ENCODE measurements at regions of chr22 and their contacts with region 1.

Region 1: GRCh38 chr22:26789951-26790350 is 132.6 kb downstream of the MIAT start:
- DNase-seq: no peak
- ATAC-seq: no peak
- H3K4me3 ChIP-seq: no peak overlapping the region
- H3K4me3 Mint-ChIP-seq: no peak overlapping the region
- H3K27ac ChIP-seq: no peak overlapping the region
- H3K27ac Mint-ChIP-seq: no peak overlapping the region
- H3K4me1 ChIP-seq: peaks cover 5% of the 10 kb centered on the region
- H3K4me1 Mint-ChIP-seq: peaks cover 9% of the 10 kb centered on the region
- H3K27me3 ChIP-seq: no peaks in the 10 kb centered on the region
- H3K27me3 Mint-ChIP-seq: no peaks in the 10 kb centered on the region
- CTCF ChIP-seq: no peak

Region 2: DNA sequence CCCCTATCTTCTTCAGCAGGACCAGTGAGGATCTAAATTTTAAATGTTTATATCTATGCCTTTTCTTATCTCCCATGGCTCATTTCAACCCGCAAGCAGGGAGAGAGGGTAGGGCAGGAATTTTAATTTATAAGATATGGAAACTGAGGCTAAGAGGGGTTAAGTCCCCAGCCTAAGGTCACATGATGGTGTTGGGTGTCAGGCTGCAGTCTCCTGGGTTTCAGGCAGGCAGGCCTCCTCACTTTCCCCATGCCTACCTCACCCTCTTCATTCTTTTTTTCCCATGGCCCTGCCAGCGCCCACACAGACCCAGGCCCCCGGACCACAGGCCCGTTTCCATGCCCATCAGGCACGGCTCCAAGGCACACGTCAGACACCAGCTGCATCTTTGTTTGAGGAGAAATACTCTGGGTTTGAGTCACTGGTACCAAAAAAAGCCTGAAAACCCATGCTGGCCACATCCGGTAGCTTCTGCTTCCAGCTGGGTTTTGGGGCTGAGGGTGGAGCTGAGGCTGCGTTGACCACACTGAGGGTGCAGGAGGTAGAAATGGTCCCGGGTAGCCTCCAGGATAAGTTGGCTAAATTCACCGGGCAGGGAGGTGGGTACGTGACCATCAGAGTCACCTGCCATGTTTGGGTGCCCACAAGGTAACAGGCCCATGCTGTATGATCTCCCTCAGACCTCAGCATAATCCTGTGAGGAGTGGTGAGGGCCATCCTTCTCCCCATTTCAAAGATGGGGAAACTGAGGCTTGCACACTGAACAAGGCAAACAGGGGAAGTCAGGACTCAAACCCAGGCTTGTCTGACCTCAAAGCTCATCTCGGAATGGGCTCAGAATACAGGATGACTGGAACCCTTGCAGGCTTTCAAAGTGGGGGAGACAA is 179.6 kb before region 1 on chr22:
- CTCF ChIA-PET with region 1: no interaction called
- POLR2A ChIA-PET with region 1: no interaction called
- intact Hi-C with region 1: no loop called
- DNase-seq: peak in 7 of 9 experiments; percentile 16 to 75 (median 43)
- ATAC-seq: peak; percentile 79
- H3K4me3 ChIP-seq: peak overlapping the region in 1 of 2 experiments; percentile 7
- H3K4me3 Mint-ChIP-seq: peak overlapping the region; percentile 37
- H3K27ac ChIP-seq: peak overlapping the region in 1 of 2 experiments; percentile 53
- H3K27ac Mint-ChIP-seq: peak overlapping the region; percentile 81
- H3K4me1 ChIP-seq: peaks cover 22% of the 10 kb centered on the region
- H3K4me1 Mint-ChIP-seq: peaks cover 22% of the 10 kb centered on the region
- H3K27me3 ChIP-seq: no peaks in the 10 kb centered on the region
- H3K27me3 Mint-ChIP-seq: no peaks in the 10 kb centered on the region
- CTCF ChIP-seq: no peak

Region 3: DNA sequence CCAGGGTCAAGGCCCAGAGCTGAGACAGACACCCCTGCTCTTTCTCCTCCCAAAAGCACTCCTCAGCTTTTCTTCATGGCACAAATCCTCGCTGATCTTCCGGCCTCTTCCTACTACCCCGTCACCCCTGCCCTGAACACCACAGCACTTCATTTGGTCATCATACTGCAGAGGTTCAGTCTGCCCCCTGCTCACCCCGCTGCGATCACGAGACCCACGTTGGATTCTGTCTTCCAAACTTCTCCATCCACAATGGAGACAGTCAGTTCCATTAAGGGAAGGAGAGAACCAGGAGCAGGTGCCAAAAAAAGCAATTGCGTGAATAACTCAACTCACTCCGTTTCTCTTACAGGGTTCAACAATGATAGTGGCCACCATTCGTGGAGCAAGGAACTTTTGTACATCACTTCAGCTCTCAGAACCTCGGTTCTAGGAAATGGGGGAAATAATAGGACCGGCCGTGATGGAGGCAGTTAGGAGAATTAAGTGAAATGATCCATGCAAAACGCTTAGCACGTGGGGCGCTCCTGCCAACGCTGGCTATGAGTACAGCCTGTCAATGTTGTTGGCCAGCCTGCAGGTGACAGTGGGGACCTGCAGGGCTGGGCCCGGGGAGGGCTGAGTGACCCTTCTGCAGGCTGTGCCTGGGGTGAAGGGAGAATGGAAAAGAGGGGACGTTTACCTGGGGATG is 965.7 kb after region 1 on chr22:
- CTCF ChIA-PET with region 1: interaction called, 3 read pairs
- POLR2A ChIA-PET with region 1: no interaction called
- intact Hi-C with region 1: loop called in 1 of 2 experiments (anchors 5 kb)
- DNase-seq: no peak
- ATAC-seq: no peak
- H3K4me3 ChIP-seq: no peak overlapping the region
- H3K4me3 Mint-ChIP-seq: no peak overlapping the region
- H3K27ac ChIP-seq: no peak overlapping the region
- H3K27ac Mint-ChIP-seq: no peak overlapping the region
- H3K4me1 ChIP-seq: no peaks in the 10 kb centered on the region
- H3K4me1 Mint-ChIP-seq: no peaks in the 10 kb centered on the region
- H3K27me3 ChIP-seq: no peaks in the 10 kb centered on the region
- H3K27me3 Mint-ChIP-seq: no peaks in the 10 kb centered on the region
- CTCF ChIP-seq: no peak